ENCODE measurements at regions of chr7 and their contacts with region 1.

Region 1: DNA sequence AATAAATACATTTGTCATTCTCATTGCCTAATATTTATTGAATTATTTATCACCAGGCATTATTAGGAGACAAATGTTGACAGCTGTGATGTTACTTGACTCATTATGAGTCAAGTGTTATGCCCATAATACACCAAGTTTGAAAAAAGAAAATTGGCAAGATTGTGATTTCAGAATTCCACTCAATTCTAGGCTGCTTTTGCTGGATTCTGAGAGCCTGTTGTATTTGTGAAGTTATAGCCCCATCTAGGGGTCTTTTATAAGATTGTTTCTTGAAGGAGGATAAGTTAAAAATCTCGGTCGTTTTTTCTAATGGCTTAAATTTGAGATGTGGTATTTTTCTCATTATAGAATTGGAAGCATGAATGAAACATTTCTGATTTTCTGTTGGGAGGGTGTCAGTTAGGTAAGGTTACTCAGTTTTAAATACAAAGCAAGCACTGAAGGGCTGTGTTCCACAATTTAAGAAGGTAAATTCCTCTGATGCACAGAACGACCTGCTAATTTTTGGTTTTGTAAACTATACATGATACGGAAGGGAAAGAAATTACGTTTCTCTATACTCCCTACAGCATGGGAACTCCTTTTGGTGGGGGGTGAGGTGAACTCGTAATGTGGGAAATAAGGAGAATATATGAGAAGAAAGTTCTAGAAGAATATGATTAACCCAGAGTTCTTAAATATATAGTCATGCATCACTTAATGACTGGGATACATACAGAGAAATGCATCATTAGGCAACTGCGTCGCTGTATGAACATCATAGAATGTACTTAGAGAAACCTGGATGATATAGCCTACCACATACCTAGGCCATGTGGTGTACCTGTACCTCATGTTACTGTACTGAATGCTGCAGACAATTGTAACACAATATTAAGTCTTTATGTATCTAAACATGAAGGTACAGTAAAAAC is 2.6 kb downstream of the STK31 start:
- DNase-seq: peak; percentile 67
- H3K4me3 ChIP-seq: no peak overlapping the region
- H3K27ac ChIP-seq: no peak overlapping the region
- H3K4me1 ChIP-seq: no peaks in the 10 kb centered on the region
- CTCF ChIP-seq: peak; percentile 90

Region 2: DNA sequence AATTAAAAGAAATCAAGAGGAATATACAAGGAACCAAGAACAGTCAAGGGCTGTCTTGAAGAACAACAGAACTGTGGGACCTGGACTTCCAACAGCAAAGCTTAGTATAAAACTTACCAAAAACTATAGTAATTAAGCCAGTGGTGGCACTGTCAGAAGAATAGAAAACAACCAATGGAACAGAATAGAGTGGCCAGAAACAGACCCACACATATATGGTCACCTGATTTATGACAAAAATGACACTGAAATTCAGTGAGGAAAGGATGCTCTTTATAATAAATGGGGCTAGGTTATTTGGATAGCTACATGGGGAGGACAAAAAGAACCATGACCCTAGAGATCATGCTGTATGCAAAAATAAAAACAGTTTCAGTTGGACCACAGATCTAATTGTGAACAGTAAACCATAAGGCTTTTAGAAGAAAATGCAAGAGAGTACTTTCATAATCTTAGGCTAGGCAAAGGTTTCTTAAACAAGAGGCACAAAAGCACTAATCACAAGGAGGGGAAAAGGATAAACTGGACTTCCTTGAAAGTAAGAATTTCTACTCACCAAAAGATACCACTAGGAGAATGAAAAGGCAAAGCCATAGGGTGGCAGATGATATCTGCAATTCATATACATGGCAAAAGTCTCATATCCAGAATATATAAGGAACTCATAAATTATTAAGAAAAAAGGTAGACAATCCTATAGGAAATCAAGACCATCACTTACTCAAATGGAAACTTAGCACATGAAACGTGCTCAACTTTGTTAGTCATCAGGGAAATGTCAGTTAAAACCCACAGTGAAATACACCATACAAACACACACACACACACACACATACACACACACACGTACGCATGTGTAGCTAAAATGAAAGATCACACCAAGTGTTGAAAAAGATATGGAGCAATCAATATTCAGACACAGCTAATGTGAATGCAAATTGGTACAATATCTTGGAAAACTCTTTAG is 719.5 kb before region 1 on chr7:
- CTCF ChIA-PET with region 1: no interaction called
- POLR2A ChIA-PET with region 1: no interaction called
- intact Hi-C with region 1: no loop called
- DNase-seq: peak; percentile 54
- H3K4me3 ChIP-seq: peak overlapping the region; percentile 40
- H3K27ac ChIP-seq: peak overlapping the region; percentile 94
- H3K4me1 ChIP-seq: peaks cover 80% of the 10 kb centered on the region
- CTCF ChIP-seq: no peak

Region 3: DNA sequence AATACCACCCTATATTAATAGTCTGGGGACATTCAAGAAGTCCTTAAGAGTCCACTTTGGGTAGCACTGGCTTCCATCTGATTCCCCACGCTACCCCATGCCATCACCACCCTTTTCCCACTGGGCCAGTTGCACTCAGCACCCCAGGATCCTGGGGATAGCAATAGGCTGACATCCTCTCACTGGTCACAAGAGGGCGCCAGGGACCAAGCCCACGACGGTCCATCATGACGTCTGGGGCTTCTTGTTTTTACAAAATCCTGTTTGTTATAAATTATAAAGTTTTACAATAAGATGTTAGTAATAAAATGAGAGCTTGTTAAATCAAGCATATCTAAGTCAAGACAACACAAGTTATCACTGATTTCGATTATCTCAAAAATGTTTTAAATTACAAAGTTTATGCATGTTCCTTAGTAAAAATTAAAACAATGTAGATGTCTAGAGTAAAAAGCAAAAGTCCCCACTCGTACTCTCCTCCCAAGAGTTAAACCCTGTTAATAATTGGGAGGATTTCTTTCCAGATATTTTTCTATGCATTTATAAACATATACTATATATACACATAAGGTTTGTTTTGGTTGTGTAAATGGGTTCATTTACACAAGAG is 450.7 kb before region 1 on chr7:
- CTCF ChIA-PET with region 1: no interaction called
- POLR2A ChIA-PET with region 1: no interaction called
- intact Hi-C with region 1: loop called (anchors 5 kb)
- DNase-seq: peak; percentile 76
- H3K4me3 ChIP-seq: no peak overlapping the region
- H3K27ac ChIP-seq: no peak overlapping the region
- H3K4me1 ChIP-seq: no peaks in the 10 kb centered on the region
- CTCF ChIP-seq: peak; percentile 98

Region 4: DNA sequence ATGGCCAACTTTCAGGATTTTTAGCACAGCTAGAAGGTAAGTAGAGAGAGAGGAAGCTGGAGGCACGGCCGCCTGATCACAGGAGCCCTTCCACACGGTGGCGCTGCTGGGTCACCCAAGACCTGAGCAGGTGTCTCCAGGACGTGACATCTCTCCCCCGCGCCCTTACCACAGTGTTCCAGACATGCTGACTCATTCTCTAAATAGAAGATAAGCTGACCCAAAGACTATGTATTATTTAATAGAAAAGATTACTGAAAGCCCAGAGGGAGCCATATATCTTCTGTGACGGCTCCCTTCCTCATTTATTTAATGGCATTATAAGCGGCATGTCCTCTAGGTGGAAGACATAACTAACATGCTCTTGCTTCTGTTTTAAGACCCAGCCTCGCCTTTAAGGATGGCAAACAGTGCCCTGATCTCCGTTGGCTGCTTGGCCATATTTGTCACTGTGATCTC is 439.5 kb before region 1 on chr7:
- CTCF ChIA-PET with region 1: no interaction called
- POLR2A ChIA-PET with region 1: interaction called, 4 read pairs
- intact Hi-C with region 1: loop called (anchors 5 kb)
- DNase-seq: peak; percentile 93
- H3K4me3 ChIP-seq: peak overlapping the region; percentile 57
- H3K27ac ChIP-seq: peak overlapping the region; percentile 7
- H3K4me1 ChIP-seq: peaks cover 15% of the 10 kb centered on the region
- CTCF ChIP-seq: peak; percentile 95

Region 5: DNA sequence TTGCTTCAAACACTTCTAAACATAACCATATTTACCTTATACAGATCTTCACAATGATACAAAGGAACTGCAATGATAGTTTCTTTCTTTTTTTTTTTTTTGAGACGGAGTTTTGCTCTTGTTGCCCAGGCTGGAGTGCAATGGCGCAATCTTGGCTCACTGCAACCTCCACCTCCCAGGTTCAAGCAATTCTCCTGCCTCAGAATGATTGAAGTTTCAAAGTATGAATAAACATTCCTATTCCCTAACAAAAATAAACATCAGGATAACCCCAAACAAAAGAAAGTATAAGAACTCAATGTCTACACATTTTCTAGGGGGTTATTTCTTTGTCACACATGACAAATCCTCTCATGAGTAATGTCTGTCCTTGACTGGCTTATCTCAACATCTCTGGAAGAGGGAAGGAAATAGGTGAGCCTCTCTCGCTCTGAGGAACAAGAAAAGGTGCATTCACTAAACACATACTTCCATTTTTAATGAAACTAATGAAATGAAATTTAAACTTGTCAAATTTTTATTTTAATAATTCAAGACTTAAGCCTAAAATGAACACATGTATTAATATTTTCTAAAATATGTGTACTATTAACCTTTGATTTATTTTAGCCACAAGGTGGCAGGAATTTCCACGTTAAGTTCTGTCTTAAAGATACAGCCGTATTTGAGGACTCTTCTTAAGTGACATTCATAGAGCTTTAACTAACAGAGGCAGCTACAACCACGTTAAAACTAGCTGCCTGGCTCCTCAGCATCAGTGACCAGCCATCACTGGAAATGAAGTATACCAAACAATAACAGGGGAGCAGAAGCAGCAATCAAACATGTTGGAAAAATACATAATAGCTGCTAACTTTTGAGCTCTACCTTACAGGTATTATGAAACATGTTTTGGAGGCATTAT is 355.2 kb before region 1 on chr7:
- CTCF ChIA-PET with region 1: no interaction called
- POLR2A ChIA-PET with region 1: no interaction called
- intact Hi-C with region 1: loop called (anchors 5 kb)
- DNase-seq: peak; percentile 77
- H3K4me3 ChIP-seq: no peak overlapping the region
- H3K27ac ChIP-seq: peak overlapping the region; percentile 17
- H3K4me1 ChIP-seq: peaks cover 37% of the 10 kb centered on the region
- CTCF ChIP-seq: peak; percentile 87

Region 6: DNA sequence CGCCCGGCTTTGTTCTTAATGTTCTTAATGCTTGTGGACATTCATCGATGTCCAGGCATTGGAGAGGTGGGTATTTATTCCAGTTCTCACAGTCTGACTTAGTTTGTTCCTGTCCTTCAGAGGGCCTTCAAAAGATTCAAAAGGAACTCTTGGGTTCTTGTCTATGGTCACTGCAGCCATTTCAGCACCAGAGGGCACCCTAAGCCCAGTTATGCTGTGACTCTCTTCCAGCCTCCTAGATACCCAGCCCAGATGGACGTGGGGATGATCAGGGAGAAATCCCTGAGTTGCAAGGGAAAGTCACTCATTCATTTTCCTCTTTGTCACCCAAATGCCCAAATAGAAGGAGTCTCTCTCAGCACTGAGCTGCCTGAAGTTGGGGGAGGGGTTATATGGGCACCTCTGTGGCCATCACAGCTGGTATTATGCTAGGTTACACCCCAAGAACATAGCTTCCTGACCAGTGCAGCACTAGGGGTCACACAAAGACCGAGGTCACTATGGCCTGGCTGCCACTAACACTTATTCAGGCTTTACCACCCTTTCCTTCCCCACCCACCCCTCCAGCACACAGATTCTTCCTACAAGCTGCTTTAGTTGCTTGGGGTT is 141.9 kb before region 1 on chr7:
- CTCF ChIA-PET with region 1: no interaction called
- POLR2A ChIA-PET with region 1: no interaction called
- intact Hi-C with region 1: loop called (anchors 1 kb)
- DNase-seq: peak; percentile 71
- H3K4me3 ChIP-seq: no peak overlapping the region
- H3K27ac ChIP-seq: no peak overlapping the region
- H3K4me1 ChIP-seq: no peaks in the 10 kb centered on the region
- CTCF ChIP-seq: peak; percentile 94

Region 7: DNA sequence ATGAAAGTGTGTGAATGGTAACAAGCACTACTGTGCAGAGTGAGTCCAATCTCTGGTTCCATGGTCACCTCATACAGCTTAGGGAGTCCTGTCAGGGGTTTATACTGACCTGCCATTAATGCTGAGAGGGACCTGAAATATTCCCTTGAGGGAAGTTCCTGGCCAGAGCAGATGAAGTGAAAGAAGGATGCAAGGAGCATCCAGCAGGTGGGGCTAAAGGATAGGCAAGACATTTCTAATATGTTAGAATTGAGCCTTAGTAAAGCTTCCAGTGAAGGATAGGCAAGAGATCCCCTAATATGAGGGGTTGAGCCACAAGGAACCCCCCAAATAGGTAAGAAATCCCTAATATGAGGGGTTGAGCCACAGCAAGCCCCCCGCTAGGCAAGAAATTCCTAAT is 58.1 kb before region 1 on chr7:
- CTCF ChIA-PET with region 1: no interaction called
- POLR2A ChIA-PET with region 1: no interaction called
- intact Hi-C with region 1: loop called (anchors 5 kb)
- DNase-seq: peak; percentile 23
- H3K4me3 ChIP-seq: no peak overlapping the region
- H3K27ac ChIP-seq: no peak overlapping the region
- H3K4me1 ChIP-seq: no peaks in the 10 kb centered on the region
- CTCF ChIP-seq: peak; percentile 69

Measured in OCI-LY7 (cell line).